K562 (cell line): ENCODE measurements at regions of chr3 and their contacts with region 1.

Region 1: DNA sequence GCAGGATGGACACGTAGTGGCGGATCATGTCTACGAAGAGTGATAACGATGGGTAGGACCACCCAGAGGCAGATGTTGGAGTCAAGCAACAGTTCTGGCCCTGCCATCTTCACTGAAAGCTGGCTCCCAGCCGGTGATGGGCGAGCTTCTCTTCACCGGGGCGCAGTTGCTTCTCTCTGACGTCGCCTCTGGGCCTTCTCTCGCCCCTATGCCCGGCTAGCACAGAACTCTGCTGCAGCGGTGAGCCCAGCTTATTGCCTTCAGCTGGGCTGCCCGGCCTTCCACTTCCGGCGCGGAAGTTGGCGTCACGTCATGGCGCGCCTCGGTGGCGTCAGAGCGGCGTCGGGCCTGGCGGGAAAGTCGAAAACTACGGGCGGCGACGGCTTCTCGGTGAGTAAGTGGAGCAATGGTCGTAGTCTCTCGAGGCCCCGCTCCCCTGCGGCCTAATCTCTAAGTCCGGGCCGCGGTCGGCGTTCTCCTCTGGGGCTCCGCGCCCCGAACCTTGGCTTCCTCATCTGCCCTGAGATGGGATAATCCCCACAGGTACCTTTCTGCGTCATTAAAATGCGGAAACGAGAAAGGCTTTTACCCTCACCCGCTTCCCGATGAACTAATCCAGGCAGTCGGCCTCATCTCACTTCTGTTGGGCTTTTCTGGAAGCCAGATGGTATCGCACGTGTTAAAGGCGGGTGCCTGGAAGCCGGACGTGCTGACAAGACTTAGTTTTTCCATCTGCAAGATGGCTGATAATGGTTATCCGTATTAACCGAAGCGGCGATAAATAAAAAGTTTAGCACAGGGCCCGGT is at the start of gene FANCD2:
- DNase-seq: peak; percentile 86 to 96 (median 88)
- ATAC-seq: peak; percentile 92
- H3K4me3 ChIP-seq: peak within 1 kb of the TSS; percentile 81
- H3K27ac ChIP-seq: peak within 1 kb of the TSS; percentile 86
- H3K4me1 ChIP-seq: peaks cover 10 to 13% of the 10 kb centered on the region in 2 experiments; a peak in 4 of 5 replicates
- H3K27me3 ChIP-seq: no peaks in the 10 kb centered on the region; a peak in 1 of 5 replicates
- CTCF ChIP-seq: no peak
- EP300 ChIP-seq: peak; percentile 58
- POLR2A ChIP-seq: peak; percentile 88
- RAD21 ChIP-seq: peak in 1 of 2 experiments; percentile 23; a peak in 2 of 4 replicates
- polyA plus RNA-seq, gene FANCD2: 86.6 to 105 TPM

Region 2: GRCh38 chr3:9715764-9716437 is 310.4 kb before region 1 on chr3:
- CTCF ChIA-PET with region 1: no interaction called
- POLR2A ChIA-PET with region 1: no interaction called
- in situ Hi-C with region 1: no loop called
- intact Hi-C with region 1: loop called (anchors 5 kb)
- DNase-seq: peak; percentile 82 to 94 (median 87)
- ATAC-seq: peak; percentile 99
- H3K4me3 ChIP-seq: no peak overlapping the region
- H3K27ac ChIP-seq: peak overlapping the region; percentile 62; the same call in 2 of the 3 replicates
- H3K4me1 ChIP-seq: peaks cover 5 to 10% of the 10 kb centered on the region in 2 experiments; a peak in 4 of 5 replicates
- H3K27me3 ChIP-seq: peaks cover 33 to 38% of the 10 kb centered on the region in 2 experiments
- CTCF ChIP-seq: peak; percentile 93 to 99 (median 99)
- EP300 ChIP-seq: peak; percentile 79
- POLR2A ChIP-seq: no peak
- RAD21 ChIP-seq: peak; percentile 99

Region 3: GRCh38 chr3:9843715-9844438 is 182.4 kb before region 1 on chr3 and contains the start of gene RPUSD3:
- CTCF ChIA-PET with region 1: no interaction called
- POLR2A ChIA-PET with region 1: no interaction called
- in situ Hi-C with region 1: no loop called
- intact Hi-C with region 1: loop called (anchors 10 kb)
- DNase-seq: peak; percentile 99 to 100 (median 100)
- ATAC-seq: peak; percentile 99
- H3K4me3 ChIP-seq: peak within 1 kb of the TSS; percentile 72
- H3K27ac ChIP-seq: peak within 1 kb of the TSS; percentile 73
- H3K4me1 ChIP-seq: peaks cover 7 to 22% of the 10 kb centered on the region in 2 experiments; a peak in 2 of 5 replicates
- H3K27me3 ChIP-seq: no peaks in the 10 kb centered on the region
- CTCF ChIP-seq: no peak
- EP300 ChIP-seq: no peak; the same call in 1 of the 2 replicates
- POLR2A ChIP-seq: peak; percentile 94
- RAD21 ChIP-seq: no peak
- polyA plus RNA-seq, gene RPUSD3: 13.8 to 26.4 TPM

Region 4: DNA sequence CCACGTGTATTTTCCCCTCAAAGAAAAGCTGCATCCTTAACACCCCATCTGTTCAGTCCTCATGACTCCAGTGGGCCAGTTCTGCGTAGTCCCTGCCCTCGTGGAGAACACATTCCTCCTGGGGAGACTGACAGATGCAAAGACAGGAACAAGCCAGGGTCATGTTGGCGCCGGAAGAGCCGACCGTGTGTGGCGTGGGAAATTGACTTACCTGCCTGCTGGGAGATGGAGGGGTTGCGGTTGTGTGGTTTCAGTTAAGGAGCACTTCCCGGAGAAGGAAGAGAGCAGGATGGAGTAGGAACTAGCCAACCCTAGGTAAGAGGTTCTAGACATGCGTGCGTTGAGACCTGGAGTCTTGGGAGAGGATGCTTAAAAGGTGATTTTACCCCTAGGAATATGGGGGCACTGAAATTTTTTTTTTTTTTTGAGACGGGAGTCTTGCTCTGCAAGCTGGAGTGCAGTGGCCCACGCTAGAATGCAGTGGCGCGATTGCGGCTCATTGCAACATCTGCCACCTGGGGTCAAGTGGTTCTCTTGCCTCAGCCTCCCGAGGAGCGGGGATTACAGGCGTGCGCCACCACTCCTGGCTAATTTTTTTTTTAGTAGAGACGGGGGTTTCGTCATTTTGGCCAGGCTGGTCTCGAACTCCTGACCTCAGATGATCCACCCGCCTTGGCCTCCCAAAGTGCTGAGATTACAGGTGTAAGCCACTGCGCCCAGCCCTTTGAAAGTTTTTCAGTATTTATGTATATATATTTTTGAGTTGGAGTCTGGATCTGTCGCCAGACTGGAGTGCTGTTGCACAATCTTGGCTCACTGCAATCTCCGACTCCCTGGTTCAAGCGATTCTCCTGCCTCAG is 116.7 kb after region 1 on chr3:
- CTCF ChIA-PET with region 1: no interaction called
- POLR2A ChIA-PET with region 1: no interaction called
- in situ Hi-C with region 1: no loop called
- intact Hi-C with region 1: loop called (anchors 5 kb)
- DNase-seq: peak; percentile 34 to 68 (median 42)
- ATAC-seq: peak; percentile 66
- H3K4me3 ChIP-seq: peak overlapping the region; percentile 61
- H3K27ac ChIP-seq: peak overlapping the region; percentile 84
- H3K4me1 ChIP-seq: peaks cover 15 to 27% of the 10 kb centered on the region in 2 experiments; a peak in 4 of 5 replicates
- H3K27me3 ChIP-seq: no peaks in the 10 kb centered on the region
- CTCF ChIP-seq: no peak
- EP300 ChIP-seq: peak; percentile 64
- POLR2A ChIP-seq: no peak; the same call in 1 of the 2 replicates
- RAD21 ChIP-seq: no peak; a peak in 1 of 4 replicates

Region 5: DNA sequence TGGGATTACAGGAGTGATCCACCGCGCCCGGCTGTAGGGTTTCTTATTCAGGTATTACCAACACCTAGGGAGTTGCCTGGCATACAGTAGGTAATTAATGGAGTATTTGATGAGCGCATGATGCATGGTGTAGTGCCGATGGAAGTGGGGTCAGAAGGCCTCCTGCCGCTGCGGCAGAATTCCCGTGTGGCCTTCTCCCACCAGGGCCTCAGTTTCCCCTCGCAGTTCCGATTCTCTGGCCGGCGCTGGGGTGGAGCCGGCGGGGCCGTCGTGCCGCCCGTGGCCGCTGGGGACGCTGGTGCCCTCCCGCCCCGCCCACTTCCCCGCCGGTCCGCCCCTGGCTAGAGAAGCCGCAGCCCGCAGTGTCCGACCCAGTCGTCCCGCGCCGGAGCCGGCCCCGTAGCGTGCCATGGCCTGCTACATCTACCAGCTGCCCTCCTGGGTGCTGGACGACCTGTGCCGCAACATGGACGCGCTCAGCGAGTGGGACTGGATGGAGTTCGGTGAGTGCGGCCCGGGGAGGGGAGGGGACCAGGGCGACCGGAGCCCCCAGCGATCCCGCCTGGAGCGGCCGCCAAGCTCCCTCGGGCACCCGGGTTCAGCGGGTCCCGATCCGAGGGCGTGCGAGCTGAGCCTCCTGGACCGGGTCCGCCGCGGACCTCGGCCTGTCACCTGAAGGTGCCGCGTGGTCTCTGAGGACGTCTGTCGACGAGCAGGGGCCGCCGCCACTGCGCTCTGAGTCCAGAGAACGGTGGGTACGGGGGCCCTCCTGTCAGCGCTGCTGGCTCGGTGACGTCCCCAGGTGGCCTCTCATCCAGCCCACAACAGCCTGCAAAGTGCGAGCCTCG is 138.5 kb after region 1 on chr3 and contains the start of gene IRAK2:
- CTCF ChIA-PET with region 1: no interaction called
- POLR2A ChIA-PET with region 1: no interaction called
- in situ Hi-C with region 1: no loop called
- intact Hi-C with region 1: loop called (anchors 5 kb)
- DNase-seq: peak; percentile 87 to 96 (median 94)
- ATAC-seq: peak; percentile 96
- H3K4me3 ChIP-seq: peak within 1 kb of the TSS; percentile 69
- H3K27ac ChIP-seq: peak within 1 kb of the TSS; percentile 41; the same call in 1 of the 3 replicates
- H3K4me1 ChIP-seq: peaks cover 0 to 17% of the 10 kb centered on the region in 2 experiments; a peak in 3 of 5 replicates
- H3K27me3 ChIP-seq: no peaks in the 10 kb centered on the region
- CTCF ChIP-seq: peak; percentile 72 to 83 (median 82)
- EP300 ChIP-seq: no peak
- POLR2A ChIP-seq: peak; percentile 64
- RAD21 ChIP-seq: peak; percentile 23 to 32
- polyA plus RNA-seq, gene IRAK2: 0.42 to 1.0 TPM

Region 6: GRCh38 chr3:10833855-10834414 is 807.6 kb after region 1 on chr3:
- CTCF ChIA-PET with region 1: no interaction called
- POLR2A ChIA-PET with region 1: no interaction called
- in situ Hi-C with region 1: no loop called
- intact Hi-C with region 1: no loop called
- DNase-seq: no peak
- ATAC-seq: no peak
- H3K4me3 ChIP-seq: no peak overlapping the region
- H3K27ac ChIP-seq: no peak overlapping the region
- H3K4me1 ChIP-seq: no peaks in the 10 kb centered on the region
- H3K27me3 ChIP-seq: peaks cover 11 to 31% of the 10 kb centered on the region in 2 experiments; a peak in 4 of 5 replicates
- CTCF ChIP-seq: no peak
- EP300 ChIP-seq: no peak
- POLR2A ChIP-seq: no peak
- RAD21 ChIP-seq: no peak